HEK293T (cell line): ENCODE measurements at regions of chr15 and their contacts with region 1.

Region 1: DNA sequence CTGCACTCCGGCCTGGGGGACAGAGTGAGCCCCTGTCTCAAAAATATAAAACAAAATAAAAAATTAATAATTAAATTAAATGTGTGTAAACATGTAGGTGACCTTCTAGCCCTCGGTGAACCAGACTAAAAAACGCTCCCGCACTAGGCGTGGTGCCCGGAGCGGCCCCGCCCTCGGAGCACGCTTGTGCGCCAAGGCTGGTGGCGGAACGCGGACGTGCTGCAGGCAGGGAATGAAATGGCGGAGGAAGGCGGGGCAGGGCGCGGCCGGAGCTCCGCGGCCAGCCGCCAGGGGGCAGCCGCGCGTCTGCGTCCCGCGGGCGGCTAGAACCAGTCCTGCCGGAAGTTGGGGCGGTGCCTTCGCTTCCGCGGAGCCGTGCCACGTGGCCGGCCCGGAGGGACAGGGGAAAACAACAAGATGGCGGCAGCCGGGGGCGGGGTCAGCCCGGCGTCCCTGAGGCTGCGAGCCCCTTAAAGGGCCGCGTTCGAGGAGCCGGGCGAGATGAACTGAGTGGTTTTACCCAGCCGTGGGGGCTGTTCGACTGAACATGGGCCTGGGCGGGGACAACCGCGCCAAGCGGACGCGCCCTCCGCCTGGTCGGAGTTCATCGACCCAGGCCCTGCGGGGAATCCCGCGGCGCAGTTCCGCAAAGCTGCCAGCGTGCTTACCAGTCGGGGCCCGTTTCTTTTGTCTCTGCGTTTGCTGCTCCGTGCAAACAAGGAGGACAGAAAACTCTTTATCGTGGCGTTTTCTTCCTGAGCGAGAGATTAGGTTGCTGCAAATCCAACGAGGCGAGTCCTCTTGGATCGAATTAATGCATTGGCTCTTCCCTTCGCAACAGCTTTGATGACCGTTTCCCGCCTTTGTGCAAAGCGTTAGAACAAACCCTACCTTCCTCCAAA is 90.9 kb upstream of the CHD2 start:
- DNase-seq: peak; percentile 96

Region 2: DNA sequence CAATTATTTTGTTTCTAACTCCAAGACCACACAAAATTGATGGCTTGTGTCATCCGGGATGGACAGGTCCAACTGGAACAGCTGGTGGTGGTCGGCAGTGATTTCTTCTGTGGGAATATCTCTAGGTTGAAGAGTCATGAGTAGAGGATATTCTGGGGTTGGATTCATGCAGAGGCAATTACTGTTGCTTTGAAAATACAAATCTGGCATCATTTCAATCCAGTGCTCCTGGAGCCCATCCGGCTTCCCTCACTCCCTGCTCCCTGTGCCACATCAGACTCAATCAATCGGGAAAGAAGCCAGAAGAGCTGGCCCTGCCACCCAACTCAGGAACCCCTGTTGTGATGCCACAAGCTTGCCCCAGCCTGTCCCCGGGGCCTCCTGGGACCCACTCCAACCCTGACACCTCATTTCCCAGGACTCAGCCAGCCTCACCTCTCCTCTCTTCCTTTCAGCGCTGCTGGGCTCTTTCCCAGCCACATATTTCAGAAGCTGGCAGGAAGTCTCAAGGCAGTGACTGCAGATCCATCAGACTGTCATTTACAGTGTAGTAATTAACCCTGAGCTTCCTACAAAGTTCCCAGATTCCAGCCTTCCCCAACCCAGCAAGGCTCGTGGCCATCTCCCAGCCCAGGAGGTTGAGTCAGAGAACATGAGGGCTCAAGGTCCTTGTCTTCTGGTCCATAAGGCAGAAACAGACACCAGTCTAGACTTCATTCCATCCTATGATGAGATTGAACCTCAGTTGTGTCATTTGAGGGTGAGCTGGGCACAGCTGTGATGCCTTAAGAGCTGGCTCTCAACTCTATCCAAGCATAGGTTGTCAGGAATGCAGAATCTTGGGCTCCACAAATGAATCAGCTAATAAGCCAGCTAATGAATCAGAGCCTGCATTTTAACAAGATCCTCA is 267.7 kb before region 1 on chr15:
- CTCF ChIA-PET with region 1: no interaction called
- POLR2A ChIA-PET with region 1: no interaction called
- DNase-seq: no peak

Region 3: GRCh38 chr15:92797168-92797951 is 11.9 kb before region 1 on chr15:
- CTCF ChIA-PET with region 1: interaction called, 13 read pairs
- POLR2A ChIA-PET with region 1: interaction called, 7 read pairs
- DNase-seq: peak; percentile 59

Region 4: DNA sequence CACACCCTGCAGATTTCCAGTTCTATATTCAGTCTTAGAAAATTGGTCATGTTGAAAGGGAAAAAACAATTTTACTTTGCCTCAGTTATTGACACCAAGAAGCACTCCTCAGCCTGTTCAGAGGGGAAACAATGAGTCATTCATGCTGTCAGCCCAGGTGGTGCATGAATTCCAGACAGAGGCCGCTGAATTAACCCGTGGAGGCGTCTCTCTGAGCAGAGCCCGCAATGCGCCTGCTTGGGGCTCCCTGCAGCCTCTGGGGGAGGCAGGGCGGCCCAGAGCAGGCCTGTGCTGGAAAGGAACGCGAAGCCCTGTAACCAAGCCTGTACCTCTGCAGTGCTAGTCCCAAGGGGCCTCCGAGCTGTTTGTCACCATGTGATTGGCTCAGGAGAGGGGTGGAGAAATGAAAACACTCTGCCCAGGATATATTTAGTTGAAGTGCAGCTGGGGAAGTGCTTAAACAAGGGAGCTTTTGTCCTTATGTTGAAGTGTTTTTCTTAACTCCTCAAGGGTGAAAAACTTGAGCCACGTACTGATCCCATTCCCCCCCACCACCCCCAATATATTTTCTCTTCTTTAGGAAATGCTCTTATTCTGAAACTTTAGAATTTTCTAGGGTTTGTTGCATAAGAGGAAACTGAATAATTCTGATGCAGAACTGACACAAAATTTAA is 22.6 kb after region 1 on chr15:
- CTCF ChIA-PET with region 1: interaction called, 12 read pairs
- POLR2A ChIA-PET with region 1: interaction called, 69 read pairs
- DNase-seq: peak; percentile 90

Region 5: GRCh38 chr15:92903941-92904831 is 95.0 kb after region 1 on chr15:
- CTCF ChIA-PET with region 1: interaction called, 17 read pairs
- POLR2A ChIA-PET with region 1: interaction called, 48 read pairs
- DNase-seq: peak; percentile 92

Region 6: DNA sequence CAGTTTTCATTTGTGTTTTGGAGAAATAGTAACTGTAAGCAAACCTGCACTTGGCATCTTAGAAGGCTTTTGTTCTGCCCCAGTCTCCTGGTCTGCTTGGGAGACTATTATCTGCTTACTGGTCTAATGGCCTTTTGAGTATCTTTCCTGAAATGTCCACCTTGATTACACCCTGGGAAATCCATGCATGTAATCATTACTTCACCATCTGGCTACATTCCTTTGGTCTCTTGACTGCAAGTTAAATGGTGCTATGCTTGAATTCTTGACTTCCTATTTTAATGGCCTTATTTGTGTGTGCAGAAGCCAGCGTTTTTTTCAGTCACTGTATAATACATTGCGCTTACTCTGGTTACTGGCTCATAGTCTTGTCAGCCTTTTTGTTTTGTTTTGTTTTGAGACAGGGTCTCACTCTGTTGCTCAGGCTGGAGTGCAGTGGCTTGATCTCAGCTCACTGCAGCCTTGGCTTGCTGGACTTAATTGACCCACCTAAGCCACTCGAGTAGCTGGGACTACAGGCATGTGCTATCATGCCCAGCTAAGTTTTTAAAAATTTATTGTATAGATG is 120.9 kb after region 1 on chr15:
- CTCF ChIA-PET with region 1: interaction called, 4 read pairs
- POLR2A ChIA-PET with region 1: interaction called, 15 read pairs
- DNase-seq: no peak